ENCODE measurements at regions of chrX and their contacts with region 1.

Region 1: GRCh38 chrX:38166478-38167083 is 54.1 kb downstream of the SRPX start:
- DNase-seq: no peak
- ATAC-seq: no peak
- H3K4me3 ChIP-seq: no peak overlapping the region
- H3K27ac ChIP-seq: no peak overlapping the region
- H3K4me1 ChIP-seq: no peaks in the 10 kb centered on the region
- H3K27me3 ChIP-seq: no peaks in the 10 kb centered on the region
- CTCF ChIP-seq: peak in 4 of 5 experiments; percentile 15 to 54 (median 32)
- POLR2A ChIP-seq: no peak

Region 2: DNA sequence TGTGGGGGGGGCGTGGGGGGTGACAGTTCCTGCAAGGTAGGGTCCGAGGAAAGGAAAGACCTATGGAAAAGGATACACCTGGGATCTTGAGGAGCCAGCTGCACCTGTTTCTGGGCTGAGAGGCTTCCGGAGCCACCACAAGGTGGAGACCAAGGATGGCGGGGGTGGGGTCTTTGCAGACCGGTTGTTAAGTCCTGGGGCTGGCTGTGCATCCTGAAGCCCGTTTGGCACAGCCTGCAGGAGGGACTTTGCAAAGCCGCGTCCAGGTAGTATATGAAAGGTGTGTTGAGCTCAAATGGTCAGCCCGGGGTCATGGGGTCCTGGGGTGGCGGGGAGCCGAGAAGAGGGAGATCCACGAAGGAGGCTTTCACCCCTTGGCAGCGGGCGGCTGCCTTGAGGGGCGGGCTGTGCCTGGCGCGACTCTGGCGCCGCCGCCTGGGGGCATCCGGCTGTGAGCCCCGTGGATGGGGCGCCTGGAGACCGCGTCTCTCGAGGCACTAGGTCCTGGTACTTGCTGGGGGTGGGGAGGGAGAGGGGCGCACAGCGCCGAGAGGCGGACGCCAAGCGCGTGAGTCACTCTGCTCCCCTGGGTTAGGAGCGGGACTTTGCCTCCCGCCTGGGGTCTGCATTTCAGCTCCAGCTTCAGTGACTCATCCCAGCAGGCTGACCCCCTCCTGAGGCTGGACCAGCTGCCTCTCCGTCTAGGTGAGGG is 261.0 kb before region 1 on chrX:
- in situ Hi-C with region 1: loop called in 1 of 4 experiments (anchors 25 kb)
- intact Hi-C with region 1: no loop called
- DNase-seq: no peak
- ATAC-seq: no peak
- H3K4me3 ChIP-seq: peak overlapping the region in 1 of 4 donors; percentile 5
- H3K27ac ChIP-seq: no peak overlapping the region
- H3K4me1 ChIP-seq: no peaks in the 10 kb centered on the region
- H3K27me3 ChIP-seq: peaks cover 0 to 11% (median 5%) of the 10 kb centered on the region in 3 donors
- CTCF ChIP-seq: no peak
- POLR2A ChIP-seq: no peak

Region 3: DNA sequence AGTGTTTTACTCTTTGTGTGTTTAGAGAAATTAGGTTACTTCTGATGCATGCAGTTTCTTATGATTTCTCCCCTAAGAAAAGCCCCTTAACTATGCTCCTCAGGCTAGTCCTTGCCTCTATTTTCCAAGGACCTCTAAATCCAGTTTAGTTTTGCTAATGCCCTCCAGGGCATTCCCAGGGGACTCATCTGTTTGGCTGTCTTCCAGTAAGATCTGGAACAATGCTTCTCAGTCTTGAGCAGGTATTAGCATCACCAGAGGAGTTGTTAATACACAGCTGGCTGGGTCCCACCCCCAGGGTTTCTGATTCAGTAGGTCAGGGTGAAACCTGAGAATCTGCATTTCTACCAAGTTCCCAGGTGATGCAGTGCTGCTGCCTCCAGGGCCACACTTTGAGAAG is 242.7 kb after region 1 on chrX:
- in situ Hi-C with region 1: no loop called
- intact Hi-C with region 1: no loop called
- DNase-seq: no peak
- ATAC-seq: no peak
- H3K4me3 ChIP-seq: no peak overlapping the region
- H3K27ac ChIP-seq: no peak overlapping the region
- H3K4me1 ChIP-seq: no peaks in the 10 kb centered on the region
- H3K27me3 ChIP-seq: peaks cover 0 to 3% (median 0%) of the 10 kb centered on the region in 3 donors
- CTCF ChIP-seq: no peak
- POLR2A ChIP-seq: no peak

Measured in gastrocnemius medialis (tissue), 4 donors.